ENCODE measurements at regions of chr18 and their contacts with region 1.

Region 1: DNA sequence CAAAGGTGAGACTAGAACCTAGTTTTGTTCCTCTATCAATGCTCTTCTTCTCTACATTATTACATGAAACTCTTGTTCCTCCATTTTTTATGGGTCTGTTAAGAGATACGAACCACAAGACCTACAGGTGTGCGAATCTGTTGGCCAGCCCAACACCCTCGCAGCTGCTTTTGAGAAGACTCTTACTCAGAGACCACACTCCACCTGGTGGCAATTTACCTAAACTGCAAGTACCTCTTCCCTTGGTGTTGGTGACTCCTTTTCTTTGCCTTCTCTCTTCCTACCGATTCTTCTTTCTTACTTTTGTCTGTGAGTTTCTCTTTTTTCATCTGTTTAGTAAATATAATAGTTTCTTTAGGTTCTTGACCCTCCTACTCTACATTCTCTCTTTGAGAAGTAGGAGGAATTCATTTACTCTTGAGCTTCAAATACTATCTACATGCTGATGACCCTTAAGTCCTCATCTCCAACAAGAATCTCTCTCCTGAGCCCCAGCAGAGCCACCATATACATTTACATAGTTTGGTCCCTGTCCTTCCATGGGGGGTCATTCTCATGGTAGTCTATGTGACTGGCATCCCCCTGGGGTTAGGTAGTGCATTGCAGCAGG is 81.8 kb upstream of the GAREM1 start:
- DNase-seq: peak; percentile 74
- ATAC-seq: peak; percentile 85
- H3K4me3 ChIP-seq: no peak overlapping the region
- H3K27ac ChIP-seq: no peak overlapping the region
- H3K4me1 ChIP-seq: peaks cover 0 to 5% of the 10 kb centered on the region in 2 experiments; a peak in 1 of 4 replicates
- H3K27me3 ChIP-seq: no peaks in the 10 kb centered on the region
- CTCF ChIP-seq: peak; percentile 68 to 78 (median 69)
- POLR2A ChIP-seq: no peak
- RAD21 ChIP-seq: peak; percentile 82

Region 2: DNA sequence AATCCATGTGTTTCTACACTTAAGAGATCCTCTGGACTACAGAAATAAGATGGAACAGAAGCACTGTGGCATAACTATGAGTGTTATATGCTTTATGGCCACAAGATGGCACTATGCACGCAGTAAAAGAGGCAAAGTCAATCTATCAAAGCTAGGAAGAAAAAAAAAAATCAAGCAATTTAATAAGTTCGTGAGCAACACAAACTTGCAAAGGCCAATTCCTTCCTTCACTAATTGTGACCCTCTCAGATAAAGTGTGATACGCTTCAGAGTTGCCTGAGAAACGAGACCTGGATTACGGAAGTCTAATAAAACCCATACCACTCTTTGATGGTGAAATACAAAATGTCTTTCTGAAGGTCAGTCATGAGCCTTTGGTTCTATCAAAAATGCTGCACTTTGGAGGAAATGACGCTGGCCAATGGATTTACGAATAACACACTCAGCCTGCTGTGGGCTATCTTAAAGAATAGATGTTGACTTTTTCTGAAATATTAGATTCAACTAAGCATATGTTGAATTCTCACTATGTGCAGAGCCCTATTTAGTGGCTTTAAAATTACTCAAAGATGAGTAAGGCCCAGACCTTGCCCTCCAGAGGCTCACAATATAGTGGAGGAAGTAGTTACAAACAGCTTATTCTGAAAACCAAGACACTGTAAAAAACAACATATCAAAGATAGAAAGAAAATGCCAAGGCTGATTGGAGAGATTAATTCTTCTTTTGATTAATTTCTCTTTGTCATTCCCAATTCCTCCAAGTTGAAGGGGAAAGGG is 996.4 kb before region 1 on chr18:
- CTCF ChIA-PET with region 1: no interaction called
- POLR2A ChIA-PET with region 1: no interaction called
- RAD21 ChIA-PET with region 1: no interaction called
- intact Hi-C with region 1: loop called (anchors 5 kb)
- DNase-seq: peak; percentile 71
- ATAC-seq: peak; percentile 75
- H3K4me3 ChIP-seq: no peak overlapping the region
- H3K27ac ChIP-seq: no peak overlapping the region
- H3K4me1 ChIP-seq: no peaks in the 10 kb centered on the region; a peak in 1 of 4 replicates
- H3K27me3 ChIP-seq: no peaks in the 10 kb centered on the region
- CTCF ChIP-seq: peak; percentile 68 to 88 (median 86)
- POLR2A ChIP-seq: no peak
- RAD21 ChIP-seq: peak; percentile 90

Region 3: GRCh38 chr18:32271672-32272208 is 280.8 kb before region 1 on chr18:
- CTCF ChIA-PET with region 1: interaction called, 49 read pairs
- POLR2A ChIA-PET with region 1: no interaction called
- RAD21 ChIA-PET with region 1: interaction called, 3 to 10 read pairs
- intact Hi-C with region 1: loop called (anchors 1 kb)
- DNase-seq: peak; percentile 16
- ATAC-seq: peak; percentile 87
- H3K4me3 ChIP-seq: no peak overlapping the region
- H3K27ac ChIP-seq: no peak overlapping the region
- H3K4me1 ChIP-seq: no peaks in the 10 kb centered on the region
- H3K27me3 ChIP-seq: no peaks in the 10 kb centered on the region
- CTCF ChIP-seq: peak; percentile 68 to 83 (median 71)
- POLR2A ChIP-seq: no peak
- RAD21 ChIP-seq: peak; percentile 90

Region 4: GRCh38 chr18:32470713-32471633 is 81.6 kb before region 1 on chr18 and contains the start of gene GAREM1:
- CTCF ChIA-PET with region 1: interaction called, 8 read pairs
- POLR2A ChIA-PET with region 1: no interaction called
- RAD21 ChIA-PET with region 1: interaction called, 5 to 6 read pairs
- intact Hi-C with region 1: loop called (anchors 2 kb)
- DNase-seq: peak; percentile 87
- ATAC-seq: peak; percentile 93
- H3K4me3 ChIP-seq: peak within 1 kb of the TSS; percentile 63 to 77
- H3K27ac ChIP-seq: peak within 1 kb of the TSS; percentile 70
- H3K4me1 ChIP-seq: peaks cover 12 to 22% of the 10 kb centered on the region in 2 experiments; a peak in 3 of 4 replicates
- H3K27me3 ChIP-seq: no peaks in the 10 kb centered on the region
- CTCF ChIP-seq: peak; percentile 38 to 45 (median 40); a peak in 5 of 6 replicates
- POLR2A ChIP-seq: peak; percentile 73
- RAD21 ChIP-seq: peak; percentile 76
- total RNA-seq, gene GAREM1: 11.1 TPM

Region 5: DNA sequence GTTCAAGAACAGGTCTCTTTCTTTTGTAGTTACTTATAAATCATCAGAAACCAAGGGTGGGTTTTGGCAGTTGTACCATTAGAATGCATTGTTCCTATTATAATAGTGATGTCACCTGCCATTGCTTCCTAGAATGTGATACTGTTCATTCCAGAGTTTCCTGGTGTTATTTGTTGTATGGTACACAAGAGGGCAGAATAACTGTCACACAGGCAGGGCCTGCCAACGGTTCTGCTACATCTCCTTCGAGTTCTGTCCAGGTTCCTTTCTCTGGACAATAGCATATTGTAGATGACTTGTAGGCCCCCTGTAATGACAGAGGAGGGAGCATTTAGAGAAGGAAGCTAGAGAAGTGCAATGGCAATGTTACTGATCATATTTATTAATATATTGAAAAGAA is 122.0 kb after region 1 on chr18:
- CTCF ChIA-PET with region 1: no interaction called
- POLR2A ChIA-PET with region 1: no interaction called
- RAD21 ChIA-PET with region 1: no interaction called
- intact Hi-C with region 1: no loop called
- DNase-seq: no peak
- ATAC-seq: peak; percentile 81
- H3K4me3 ChIP-seq: no peak overlapping the region
- H3K27ac ChIP-seq: no peak overlapping the region
- H3K4me1 ChIP-seq: no peaks in the 10 kb centered on the region
- H3K27me3 ChIP-seq: peaks cover 33% of the 10 kb centered on the region; the same call in 1 of the 2 replicates
- CTCF ChIP-seq: peak in 2 of 3 experiments; percentile 29 to 49; a peak in 3 of 6 replicates
- POLR2A ChIP-seq: no peak
- RAD21 ChIP-seq: no peak

Measured in HCT116 (cell line).